ENCODE measurements at regions of chr12 and their contacts with region 1.

Region 1: GRCh38 chr12:2812290-2813213 is at the start of gene ITFG2:
- DNase-seq: peak; percentile 95
- ATAC-seq: peak; percentile 95
- H3K4me3 ChIP-seq: peak within 1 kb of the TSS; percentile 74
- H3K27ac ChIP-seq: peak within 1 kb of the TSS; percentile 85
- H3K4me1 ChIP-seq: peaks cover 11% of the 10 kb centered on the region; the same call in 1 of the 2 replicates
- H3K27me3 ChIP-seq: no peaks in the 10 kb centered on the region
- CTCF ChIP-seq: no peak
- total RNA-seq, gene ITFG2: 12.8 and 13.8 TPM in 2 replicates

Region 2: DNA sequence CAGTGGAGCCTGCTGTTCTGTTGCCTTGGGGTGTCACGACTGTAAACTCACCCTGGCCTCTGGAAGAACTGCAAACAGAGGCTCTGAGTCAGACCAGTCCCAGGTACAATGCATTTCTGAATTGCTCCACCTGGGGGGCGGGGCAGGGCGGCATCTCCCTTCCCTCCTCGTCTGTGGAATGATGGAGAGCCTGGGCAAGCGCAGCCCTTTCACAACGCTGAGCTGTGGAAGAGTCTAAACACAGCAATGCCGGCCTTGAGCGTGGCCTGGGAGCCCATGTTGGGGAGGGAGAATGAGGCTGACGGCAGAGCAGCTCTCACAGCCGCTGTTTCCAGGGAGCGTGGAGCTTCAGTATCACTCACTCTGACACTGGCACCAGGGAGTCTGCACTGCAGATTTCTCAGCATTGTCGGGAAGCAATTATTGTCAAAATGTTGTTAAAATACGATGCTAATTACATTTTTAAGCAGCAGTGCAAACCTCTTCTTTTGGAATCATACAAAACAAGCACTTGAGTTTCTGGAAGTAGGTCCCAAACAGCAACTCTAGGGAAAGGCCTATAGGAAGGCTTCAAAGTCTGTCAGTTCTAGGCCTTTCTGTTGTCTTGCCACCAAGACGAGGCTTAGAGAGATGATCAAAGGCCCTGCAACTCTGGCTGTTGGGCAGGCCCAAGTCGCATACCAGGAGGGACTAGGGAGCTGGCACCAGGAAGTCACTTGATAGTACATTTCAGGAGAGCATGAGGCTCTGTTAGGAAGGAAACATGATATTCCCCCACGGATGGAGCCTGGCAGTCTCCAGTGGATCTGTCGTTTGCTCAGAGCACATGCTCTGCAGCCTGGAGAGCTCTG is 261.8 kb before region 1 on chr12:
- CTCF ChIA-PET with region 1: no interaction called
- POLR2A ChIA-PET with region 1: no interaction called
- intact Hi-C with region 1: no loop called
- DNase-seq: peak; percentile 38
- ATAC-seq: no peak
- H3K4me3 ChIP-seq: no peak overlapping the region
- H3K27ac ChIP-seq: no peak overlapping the region
- H3K4me1 ChIP-seq: no peaks in the 10 kb centered on the region
- H3K27me3 ChIP-seq: peaks cover 69% of the 10 kb centered on the region
- CTCF ChIP-seq: no peak

Region 3: DNA sequence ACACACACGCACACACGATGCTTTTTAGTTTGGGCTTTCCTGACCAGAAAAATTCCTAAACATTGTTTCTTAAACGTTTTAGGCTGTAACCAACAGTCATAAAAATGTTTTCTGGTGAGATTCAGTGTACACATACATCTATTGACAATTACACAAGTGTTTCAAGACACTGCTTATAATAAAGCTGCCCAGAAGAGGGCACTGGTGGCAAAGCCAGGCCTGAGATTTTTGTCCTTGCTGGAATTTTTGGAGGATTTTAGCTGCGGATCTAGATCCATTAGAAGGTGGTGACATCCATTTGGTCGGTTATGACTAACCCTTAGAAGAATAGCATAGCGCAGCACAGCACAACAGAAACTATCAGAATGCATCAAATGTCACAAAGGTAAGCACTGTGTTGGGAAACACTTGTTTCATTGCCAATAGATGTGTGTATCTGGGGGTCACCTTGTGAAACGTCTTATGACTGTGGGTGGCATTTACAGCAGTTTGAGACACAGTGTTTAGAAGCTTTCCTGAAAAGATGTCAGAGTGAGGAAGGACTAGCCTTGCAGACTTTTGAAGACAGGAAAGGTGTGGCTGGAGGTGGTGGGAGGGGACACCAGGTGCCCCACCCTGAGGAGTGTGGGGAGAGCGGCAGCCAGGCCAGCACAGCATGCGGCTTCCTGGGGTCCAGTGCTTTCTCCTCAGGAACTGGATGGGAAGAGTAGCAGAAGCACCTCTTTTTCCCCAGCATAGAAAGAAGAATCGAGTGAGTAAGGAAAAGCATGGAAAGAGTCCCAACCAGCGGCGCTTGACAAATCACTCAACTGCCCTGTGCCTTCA is 72.5 kb before region 1 on chr12:
- CTCF ChIA-PET with region 1: no interaction called
- POLR2A ChIA-PET with region 1: no interaction called
- intact Hi-C with region 1: loop called (anchors 2 kb)
- DNase-seq: peak; percentile 64
- ATAC-seq: peak; percentile 49
- H3K4me3 ChIP-seq: no peak overlapping the region
- H3K27ac ChIP-seq: no peak overlapping the region
- H3K4me1 ChIP-seq: no peaks in the 10 kb centered on the region
- H3K27me3 ChIP-seq: peaks cover 57% of the 10 kb centered on the region
- CTCF ChIP-seq: peak; percentile 71

Region 4: GRCh38 chr12:2795291-2796186 is 17.0 kb before region 1 on chr12:
- CTCF ChIA-PET with region 1: no interaction called
- POLR2A ChIA-PET with region 1: no interaction called
- intact Hi-C with region 1: loop called (anchors 1 kb)
- DNase-seq: peak; percentile 49
- ATAC-seq: peak; percentile 64
- H3K4me3 ChIP-seq: peak overlapping the region; percentile 95
- H3K27ac ChIP-seq: no peak overlapping the region
- H3K4me1 ChIP-seq: peaks cover 21% of the 10 kb centered on the region
- H3K27me3 ChIP-seq: no peaks in the 10 kb centered on the region
- CTCF ChIP-seq: no peak

Region 5: GRCh38 chr12:2864198-2864597 is 51.6 kb after region 1 on chr12:
- CTCF ChIA-PET with region 1: no interaction called
- POLR2A ChIA-PET with region 1: no interaction called
- intact Hi-C with region 1: no loop called
- DNase-seq: no peak
- ATAC-seq: no peak
- H3K4me3 ChIP-seq: no peak overlapping the region
- H3K27ac ChIP-seq: no peak overlapping the region
- H3K4me1 ChIP-seq: no peaks in the 10 kb centered on the region
- H3K27me3 ChIP-seq: no peaks in the 10 kb centered on the region
- CTCF ChIP-seq: no peak

Region 6: DNA sequence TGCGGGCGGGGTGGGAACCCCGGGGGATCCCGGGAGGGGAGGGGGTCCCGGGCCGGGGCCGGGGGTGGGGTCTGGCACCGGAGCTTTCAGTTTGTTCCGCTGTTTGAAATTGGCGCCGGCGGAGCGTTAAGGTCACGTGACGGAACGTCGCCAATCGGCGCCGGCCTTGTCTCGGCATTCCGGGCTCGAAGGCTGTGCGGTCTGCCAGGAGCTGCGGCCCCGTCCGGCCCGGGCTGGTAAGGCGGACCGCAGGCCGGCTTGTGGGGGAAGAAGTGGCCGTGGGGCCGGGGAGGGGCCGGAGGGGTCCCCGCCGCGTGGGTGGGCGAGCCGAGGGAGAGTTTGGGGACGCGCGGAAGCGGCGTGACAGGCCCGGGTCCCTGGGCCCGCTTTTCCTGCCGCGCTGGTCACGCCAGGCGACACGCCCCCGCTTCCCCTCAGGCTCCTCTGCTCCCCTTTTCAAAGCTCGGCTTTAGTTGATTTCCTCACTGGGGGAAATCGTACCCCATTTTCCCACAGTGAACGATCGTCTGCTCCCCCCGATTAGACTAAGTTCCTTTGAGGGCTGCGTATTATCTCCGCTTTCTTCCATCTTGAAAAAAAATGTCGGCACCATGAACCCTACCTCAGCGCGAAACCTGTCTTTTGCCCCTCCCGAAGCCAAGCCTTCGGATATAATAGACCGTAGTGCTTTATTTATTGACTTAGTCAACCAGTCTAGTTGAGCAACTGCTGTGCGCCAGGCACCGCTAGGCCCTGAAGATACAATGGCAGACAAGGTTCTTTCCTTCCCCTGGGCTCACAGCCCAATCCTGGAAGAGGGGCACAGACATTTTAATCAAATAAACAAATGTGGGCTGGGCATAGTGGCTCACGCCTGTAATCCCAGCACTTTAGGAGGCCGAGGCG is 64.7 kb after region 1 on chr12 and contains the starts of genes FOXM1 and RHNO1:
- CTCF ChIA-PET with region 1: no interaction called
- POLR2A ChIA-PET with region 1: interaction called, 4 read pairs
- intact Hi-C with region 1: loop called (anchors 5 kb)
- DNase-seq: peak; percentile 85
- ATAC-seq: peak; percentile 84
- H3K4me3 ChIP-seq: peak within 1 kb of the TSS; percentile 72
- H3K27ac ChIP-seq: peak within 1 kb of the TSS; percentile 70
- H3K4me1 ChIP-seq: peaks cover 13% of the 10 kb centered on the region
- H3K27me3 ChIP-seq: no peaks in the 10 kb centered on the region
- CTCF ChIP-seq: no peak
- total RNA-seq, gene FOXM1: 71.4 and 88.6 TPM in 2 replicates
- total RNA-seq, gene RHNO1: 42.0 and 43.3 TPM in 2 replicates

Region 7: DNA sequence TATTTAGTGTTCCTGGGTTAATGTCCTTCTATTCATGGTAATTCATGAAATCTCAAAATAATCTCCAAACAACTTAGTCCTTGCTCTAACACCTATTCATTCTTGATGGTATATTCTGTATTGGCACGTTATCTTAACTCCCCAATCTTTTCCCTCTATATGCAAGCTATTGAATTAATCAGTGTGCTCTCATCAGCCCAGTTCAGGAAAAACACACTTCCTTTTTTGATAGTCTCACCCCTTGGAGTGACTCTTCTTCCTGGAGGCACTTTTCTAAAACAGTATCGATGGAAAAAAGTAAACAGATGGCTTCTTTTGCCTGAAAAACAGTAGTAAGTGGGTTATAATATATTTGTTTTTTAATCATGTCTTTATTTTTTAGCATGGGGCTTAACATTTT is 106.7 kb after region 1 on chr12:
- CTCF ChIA-PET with region 1: no interaction called
- POLR2A ChIA-PET with region 1: no interaction called
- intact Hi-C with region 1: no loop called
- DNase-seq: no peak
- ATAC-seq: no peak
- H3K4me3 ChIP-seq: no peak overlapping the region
- H3K27ac ChIP-seq: no peak overlapping the region
- H3K4me1 ChIP-seq: no peaks in the 10 kb centered on the region
- H3K27me3 ChIP-seq: no peaks in the 10 kb centered on the region
- CTCF ChIP-seq: no peak